WTC11 (cell line): ENCODE measurements at regions of chr11 and their contacts with region 1.

Region 1: GRCh38 chr11:44911029-44911814 is 39.5 kb downstream of the TP53I11 start:
- DNase-seq: peak; percentile 94
- ATAC-seq: peak; percentile 74
- H3K4me3 Mint-ChIP-seq: peak overlapping the region; percentile 54
- H3K27ac Mint-ChIP-seq: no peak overlapping the region
- H3K4me1 Mint-ChIP-seq: peaks cover 36% of the 10 kb centered on the region
- H3K27me3 Mint-ChIP-seq: no peaks in the 10 kb centered on the region
- CTCF ChIP-seq: peak; percentile 87

Region 2: DNA sequence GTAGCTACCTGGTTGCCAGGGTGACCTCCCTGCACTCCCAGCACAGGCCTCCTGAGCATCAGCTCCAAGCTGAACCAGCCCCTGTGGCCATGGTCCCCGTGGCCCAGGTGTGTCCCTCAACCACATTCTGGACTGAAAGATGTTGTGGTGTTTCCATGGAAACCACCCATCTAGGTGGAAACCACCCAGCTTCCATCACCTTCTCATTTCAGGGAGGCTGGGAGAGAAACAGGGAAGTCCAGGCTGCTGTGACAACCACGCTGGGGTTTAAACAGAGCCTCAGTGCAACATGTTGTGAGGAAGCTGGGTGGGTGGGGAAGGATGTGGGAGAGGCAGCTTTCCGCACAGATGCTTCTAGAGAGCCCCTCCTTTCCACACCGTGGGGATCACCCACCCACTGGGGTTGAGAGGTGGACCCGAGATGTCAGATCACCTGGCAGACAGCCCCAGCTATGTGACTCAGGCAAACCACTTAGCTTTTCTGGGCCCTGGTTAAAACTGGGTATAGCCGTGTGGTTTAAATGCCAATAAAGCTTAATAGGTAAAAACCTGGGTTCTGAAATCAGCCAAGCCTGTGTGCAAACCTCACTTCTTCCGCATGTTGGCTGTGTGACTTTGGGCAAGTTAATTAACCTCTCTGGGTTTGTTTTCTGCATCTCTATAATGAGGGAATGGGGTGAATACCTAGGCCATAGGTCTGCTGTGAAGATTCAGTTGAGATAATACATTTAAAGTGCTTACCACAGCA is 299.4 kb before region 1 on chr11:
- CTCF ChIA-PET with region 1: interaction called, 30 read pairs
- POLR2A ChIA-PET with region 1: no interaction called
- DNase-seq: no peak
- ATAC-seq: no peak
- H3K4me3 Mint-ChIP-seq: no peak overlapping the region
- H3K27ac Mint-ChIP-seq: no peak overlapping the region
- H3K4me1 Mint-ChIP-seq: peaks cover 31% of the 10 kb centered on the region
- H3K27me3 Mint-ChIP-seq: no peaks in the 10 kb centered on the region; the same call in 1 of the 2 replicates
- CTCF ChIP-seq: no peak

Region 3: DNA sequence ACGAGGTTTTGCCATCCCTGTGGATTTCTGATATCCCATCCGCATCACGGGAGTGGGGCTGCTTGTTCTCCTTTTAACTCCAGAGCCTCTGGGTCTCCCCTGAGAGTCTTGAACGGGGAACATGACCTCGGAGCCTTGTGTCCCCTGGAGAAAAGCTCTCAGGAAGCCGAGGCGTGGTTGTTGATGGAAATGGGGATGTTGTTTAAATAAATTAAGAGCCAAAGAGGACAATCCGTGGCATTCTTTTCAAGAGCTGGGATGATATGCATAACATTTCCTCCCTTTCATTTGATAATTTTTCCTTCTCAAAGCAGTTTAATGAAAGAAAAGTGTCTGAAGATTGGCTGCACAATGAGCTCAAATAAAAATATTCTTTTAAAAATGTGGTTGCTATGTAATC is 170.3 kb before region 1 on chr11:
- CTCF ChIA-PET with region 1: interaction called, 17 read pairs
- POLR2A ChIA-PET with region 1: no interaction called
- DNase-seq: no peak
- ATAC-seq: no peak
- H3K4me3 Mint-ChIP-seq: peak overlapping the region; percentile 34
- H3K27ac Mint-ChIP-seq: peak overlapping the region; percentile 46
- H3K4me1 Mint-ChIP-seq: peaks cover 90% of the 10 kb centered on the region
- H3K27me3 Mint-ChIP-seq: peaks cover 5% of the 10 kb centered on the region
- CTCF ChIP-seq: no peak

Region 4: GRCh38 chr11:44785856-44786606 is 125.2 kb before region 1 on chr11:
- CTCF ChIA-PET with region 1: interaction called, 31 read pairs
- POLR2A ChIA-PET with region 1: interaction called, 4 read pairs
- DNase-seq: peak; percentile 34
- ATAC-seq: peak; percentile 63
- H3K4me3 Mint-ChIP-seq: no peak overlapping the region
- H3K27ac Mint-ChIP-seq: 0 out of 2 replicates have a peak overlapping the region, but pooled peaks have one; percentile 7
- H3K4me1 Mint-ChIP-seq: peaks cover 62% of the 10 kb centered on the region
- H3K27me3 Mint-ChIP-seq: no peaks in the 10 kb centered on the region
- CTCF ChIP-seq: no peak

Region 5: DNA sequence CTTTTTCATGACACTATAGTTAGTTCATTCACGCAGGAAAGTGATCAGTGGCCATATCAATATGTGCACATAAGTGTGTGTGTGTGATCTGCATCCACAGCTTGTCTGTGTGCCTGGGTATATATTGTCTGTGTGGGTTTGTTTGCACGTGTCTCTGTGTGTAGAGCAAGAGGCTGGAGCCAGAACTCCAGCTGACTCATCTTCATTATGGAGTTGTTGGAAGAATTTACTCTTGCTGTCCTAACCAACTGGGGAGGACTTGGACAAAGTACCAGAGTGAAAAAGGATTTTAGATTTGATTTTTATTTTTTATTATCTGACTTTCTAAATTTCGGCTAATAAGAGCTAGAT is 24.5 kb before region 1 on chr11:
- CTCF ChIA-PET with region 1: interaction called, 11 read pairs
- POLR2A ChIA-PET with region 1: no interaction called
- DNase-seq: no peak
- ATAC-seq: no peak
- H3K4me3 Mint-ChIP-seq: no peak overlapping the region
- H3K27ac Mint-ChIP-seq: 0 out of 2 replicates have a peak overlapping the region, but pooled peaks have one; percentile 29
- H3K4me1 Mint-ChIP-seq: peaks cover 46% of the 10 kb centered on the region
- H3K27me3 Mint-ChIP-seq: no peaks in the 10 kb centered on the region
- CTCF ChIP-seq: no peak

Region 6: DNA sequence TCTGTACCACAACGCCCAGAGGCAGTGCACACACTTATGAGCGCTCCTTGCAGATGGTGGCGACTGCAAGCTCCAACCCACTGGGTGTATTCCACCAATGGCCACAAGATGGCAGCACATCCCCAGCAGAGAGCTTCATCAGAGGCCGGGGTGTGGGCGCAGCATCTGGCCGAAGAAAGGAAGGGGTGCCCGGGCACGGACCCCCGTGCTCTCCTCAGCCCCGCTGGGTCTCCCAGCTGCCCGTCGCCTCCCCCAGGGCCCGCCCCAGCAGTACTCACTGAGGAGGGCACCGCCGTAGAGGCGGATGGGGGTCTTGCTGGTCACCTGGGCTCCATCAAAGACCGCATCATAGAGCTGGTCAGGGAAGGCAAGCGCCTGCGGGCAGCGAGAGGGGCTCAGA is 25.3 kb after region 1 on chr11:
- CTCF ChIA-PET with region 1: interaction called, 135 read pairs
- POLR2A ChIA-PET with region 1: no interaction called
- DNase-seq: peak; percentile 93
- ATAC-seq: peak; percentile 72
- H3K4me3 Mint-ChIP-seq: no peak overlapping the region
- H3K27ac Mint-ChIP-seq: no peak overlapping the region
- H3K4me1 Mint-ChIP-seq: 0 out of 2 replicates have a peak, but pooled peaks cover 7% of the 10 kb centered on the region
- H3K27me3 Mint-ChIP-seq: no peaks in the 10 kb centered on the region; the same call in 1 of the 2 replicates
- CTCF ChIP-seq: peak; percentile 94

Region 7: GRCh38 chr11:45037434-45038005 is 126.3 kb after region 1 on chr11:
- CTCF ChIA-PET with region 1: no interaction called
- POLR2A ChIA-PET with region 1: no interaction called
- DNase-seq: no peak
- ATAC-seq: no peak
- H3K4me3 Mint-ChIP-seq: no peak overlapping the region
- H3K27ac Mint-ChIP-seq: no peak overlapping the region
- H3K4me1 Mint-ChIP-seq: no peaks in the 10 kb centered on the region
- H3K27me3 Mint-ChIP-seq: peaks cover 7% of the 10 kb centered on the region
- CTCF ChIP-seq: no peak